HCT116 (cell line): ENCODE measurements at regions of chr21 and their contacts with region 1.

Region 1: DNA sequence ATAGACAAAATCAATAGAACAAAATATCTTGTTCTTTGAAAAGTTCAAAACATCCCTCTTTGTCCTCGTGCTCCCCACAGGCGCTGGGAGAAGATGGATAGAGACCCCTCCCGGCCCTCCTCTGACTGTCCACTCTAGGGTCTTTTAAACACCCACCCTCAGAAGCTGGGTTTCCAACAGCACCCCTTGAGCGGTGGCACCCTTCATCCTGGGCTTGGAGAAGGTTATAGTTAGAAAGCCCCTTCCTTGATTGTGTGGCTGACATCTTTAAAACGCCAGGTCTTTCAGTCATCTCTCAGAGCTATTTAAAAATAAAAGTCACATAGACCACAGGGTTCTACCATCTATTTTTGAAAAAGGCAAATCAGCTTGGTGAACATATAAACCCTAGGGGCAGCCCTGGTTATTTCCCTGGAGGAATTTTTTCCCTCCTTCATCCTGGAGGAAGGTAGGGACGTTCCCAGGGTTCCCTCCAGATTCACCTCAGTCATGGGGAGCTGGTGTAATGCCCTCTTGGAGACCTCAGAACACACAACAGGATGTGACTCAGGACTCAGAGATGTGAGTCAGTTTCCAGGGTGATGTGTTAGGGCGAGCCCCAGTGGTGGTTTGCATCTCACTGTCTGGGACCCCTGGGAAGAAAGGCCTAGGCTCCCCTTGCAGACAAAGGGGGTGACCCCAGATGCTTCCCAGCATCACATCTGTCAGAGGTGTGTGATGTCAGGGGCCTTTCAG is 138.5 kb downstream of the CLIC6 start:
- DNase-seq: no peak
- ATAC-seq: peak; percentile 73
- H3K4me3 ChIP-seq: peak overlapping the region; percentile 13 to 44
- H3K27ac ChIP-seq: peak overlapping the region; percentile 94
- H3K4me1 ChIP-seq: peaks cover 63 to 83% of the 10 kb centered on the region in 2 experiments
- H3K27me3 ChIP-seq: no peaks in the 10 kb centered on the region
- CTCF ChIP-seq: no peak
- POLR2A ChIP-seq: no peak
- RAD21 ChIP-seq: no peak

Region 2: GRCh38 chr21:34360488-34361241 is 446.6 kb before region 1 on chr21:
- CTCF ChIA-PET with region 1: no interaction called
- POLR2A ChIA-PET with region 1: no interaction called
- RAD21 ChIA-PET with region 1: no interaction called
- intact Hi-C with region 1: no loop called
- DNase-seq: no peak
- ATAC-seq: no peak
- H3K4me3 ChIP-seq: no peak overlapping the region
- H3K27ac ChIP-seq: no peak overlapping the region
- H3K4me1 ChIP-seq: peaks cover 3 to 7% of the 10 kb centered on the region in 2 experiments; a peak in 2 of 4 replicates
- H3K27me3 ChIP-seq: no peaks in the 10 kb centered on the region
- CTCF ChIP-seq: no peak
- POLR2A ChIP-seq: no peak
- RAD21 ChIP-seq: no peak

Region 3: DNA sequence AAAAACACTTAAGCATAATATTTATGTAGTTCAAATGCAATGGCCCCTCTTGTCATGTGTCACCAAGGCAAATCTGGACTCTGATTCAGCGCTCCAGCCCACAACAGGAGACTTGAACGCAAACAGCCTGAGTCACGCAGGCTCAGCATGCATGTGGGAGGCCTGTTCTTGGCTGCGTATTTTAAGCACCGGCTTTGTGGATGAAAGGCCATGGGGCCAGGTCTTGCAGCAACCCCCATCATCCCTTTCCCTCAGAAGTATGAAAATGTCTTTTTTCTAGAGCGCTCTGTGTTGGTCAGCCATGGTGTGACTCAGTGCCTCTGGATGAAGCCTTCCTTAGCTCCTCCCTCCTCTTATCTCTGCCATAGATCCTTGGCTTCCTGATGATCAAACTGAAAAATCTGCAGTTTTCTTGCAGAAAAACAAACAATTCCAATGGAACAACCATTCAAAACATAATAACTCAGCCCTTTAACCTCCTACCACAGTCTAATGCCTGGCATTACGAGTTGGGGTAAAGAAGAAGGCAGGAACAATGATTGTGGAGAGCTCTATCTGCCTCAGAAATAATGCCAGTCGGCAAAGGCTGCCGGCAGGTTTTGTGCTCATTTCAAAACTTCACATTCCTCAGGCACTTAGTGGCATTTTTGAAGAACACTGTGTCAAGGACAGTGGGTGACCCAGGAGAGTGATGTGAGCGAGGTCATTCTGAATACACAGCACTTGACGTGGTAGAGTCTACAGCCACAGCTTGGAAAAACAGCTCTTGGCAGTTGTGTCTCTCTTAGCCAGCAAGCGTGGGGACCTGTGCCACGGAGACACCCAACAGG is 29.0 kb after region 1 on chr21:
- CTCF ChIA-PET with region 1: no interaction called
- POLR2A ChIA-PET with region 1: interaction called, 4 read pairs
- RAD21 ChIA-PET with region 1: no interaction called
- intact Hi-C with region 1: loop called (anchors 2 kb)
- DNase-seq: peak; percentile 97
- ATAC-seq: peak; percentile 95
- H3K4me3 ChIP-seq: peak overlapping the region; percentile 23 to 35
- H3K27ac ChIP-seq: peak overlapping the region; percentile 79
- H3K4me1 ChIP-seq: peaks cover 36 to 49% of the 10 kb centered on the region in 2 experiments
- H3K27me3 ChIP-seq: no peaks in the 10 kb centered on the region
- CTCF ChIP-seq: no peak
- POLR2A ChIP-seq: no peak
- RAD21 ChIP-seq: no peak

Region 4: DNA sequence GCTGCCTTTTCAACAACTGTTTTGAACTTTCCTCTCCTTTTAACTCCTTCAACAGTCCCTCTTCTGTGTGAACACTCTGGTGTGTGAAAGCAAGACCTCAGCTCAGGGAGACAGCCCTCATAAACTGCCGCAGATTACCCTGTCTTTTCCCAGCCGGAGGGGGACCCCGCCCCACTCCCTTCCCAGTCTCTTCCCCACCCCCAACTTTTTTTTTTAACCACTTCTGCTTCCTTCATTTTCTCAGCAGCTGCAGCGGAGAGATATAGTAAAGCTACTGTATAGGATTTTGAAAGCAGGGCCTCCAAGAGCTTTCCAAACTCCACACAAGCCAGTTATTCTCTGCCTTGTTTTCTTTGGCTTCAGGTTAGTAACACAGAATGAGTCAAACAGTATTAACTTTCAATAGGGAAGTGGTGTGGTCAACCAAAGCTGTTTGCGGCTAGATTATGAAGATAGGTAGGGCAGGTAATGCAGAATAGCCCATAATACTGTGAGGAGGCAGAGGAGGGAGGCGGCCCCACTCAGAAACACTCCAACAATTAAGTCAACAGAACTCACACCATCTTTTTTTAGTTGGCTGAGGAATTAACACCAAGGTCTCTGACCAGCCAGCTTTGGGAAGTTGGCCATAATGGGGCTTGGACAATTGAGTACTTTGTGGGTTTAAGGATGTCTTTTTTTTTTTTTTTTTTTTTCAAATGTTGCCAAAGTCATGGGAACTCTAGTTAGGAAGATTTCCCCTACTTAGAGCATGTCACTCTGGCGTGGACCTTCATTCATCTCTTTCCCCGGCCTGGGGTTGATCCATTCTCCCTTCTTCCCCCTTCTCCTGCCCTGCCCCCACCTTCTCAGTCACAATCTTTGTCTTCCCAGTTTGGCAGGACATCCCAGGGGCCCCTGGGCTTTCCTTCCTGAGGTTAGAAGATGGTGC is 38.5 kb after region 1 on chr21:
- CTCF ChIA-PET with region 1: no interaction called
- POLR2A ChIA-PET with region 1: no interaction called
- RAD21 ChIA-PET with region 1: interaction called in 1 of 2 experiments, 10 read pairs
- intact Hi-C with region 1: no loop called
- DNase-seq: peak; percentile 75
- ATAC-seq: peak; percentile 77
- H3K4me3 ChIP-seq: peak overlapping the region in 1 of 2 experiments; percentile 33; a peak in 3 of 4 replicates
- H3K27ac ChIP-seq: peak overlapping the region; percentile 65
- H3K4me1 ChIP-seq: peaks cover 57 to 60% of the 10 kb centered on the region in 2 experiments
- H3K27me3 ChIP-seq: no peaks in the 10 kb centered on the region
- CTCF ChIP-seq: no peak
- POLR2A ChIP-seq: no peak
- RAD21 ChIP-seq: no peak

Region 5: DNA sequence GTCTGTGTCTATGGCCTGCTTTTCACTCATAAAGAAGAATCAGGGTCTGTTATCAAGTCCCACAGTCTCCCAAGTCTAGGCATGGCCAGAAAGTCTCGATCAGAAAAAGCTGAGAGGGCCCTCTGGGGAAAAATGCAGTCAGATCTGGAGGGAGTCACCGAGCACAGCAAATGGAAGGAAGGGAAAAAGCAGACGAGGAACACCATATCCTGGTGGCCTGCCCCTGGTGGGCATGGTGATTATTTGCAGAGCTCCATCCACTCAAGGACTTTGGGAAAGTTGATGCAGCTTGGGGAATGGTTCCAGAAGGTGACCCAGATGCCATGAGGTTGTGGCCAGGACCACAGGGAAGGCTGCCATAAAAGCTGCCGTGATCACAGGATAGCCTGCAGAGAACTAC is 50.6 kb after region 1 on chr21:
- CTCF ChIA-PET with region 1: no interaction called
- POLR2A ChIA-PET with region 1: no interaction called
- RAD21 ChIA-PET with region 1: no interaction called
- intact Hi-C with region 1: no loop called
- DNase-seq: no peak
- ATAC-seq: peak; percentile 67
- H3K4me3 ChIP-seq: no peak overlapping the region
- H3K27ac ChIP-seq: no peak overlapping the region
- H3K4me1 ChIP-seq: peaks cover 0 to 3% of the 10 kb centered on the region in 2 experiments; a peak in 1 of 4 replicates
- H3K27me3 ChIP-seq: no peaks in the 10 kb centered on the region
- CTCF ChIP-seq: peak in 2 of 3 experiments; percentile 27 to 40; a peak in 3 of 6 replicates
- POLR2A ChIP-seq: no peak
- RAD21 ChIP-seq: no peak